GM12878 (cell line): ENCODE measurements at regions of chr1 and their contacts with region 1.

Region 1: DNA sequence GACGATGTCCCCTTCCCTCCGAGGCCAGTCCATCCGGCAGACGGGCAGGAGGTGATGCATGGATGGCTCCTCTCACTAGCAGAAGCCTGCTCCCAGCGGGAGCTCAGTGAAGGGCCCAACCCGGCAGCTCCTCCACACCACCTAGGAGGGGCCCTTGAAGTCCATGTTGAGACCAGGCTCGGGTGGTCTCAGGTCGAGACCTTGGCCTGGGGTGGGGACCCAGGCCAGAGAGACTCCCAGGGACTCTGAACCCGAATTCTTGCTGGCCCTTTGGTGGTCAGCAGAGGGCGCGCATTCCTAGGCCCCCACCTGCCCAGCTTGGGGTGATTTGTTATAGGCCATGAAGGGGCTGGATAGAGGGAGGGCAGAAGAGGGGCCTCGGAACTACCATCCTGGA is 642 bp upstream of the NT5C1A start:
- DNase-seq: no peak
- ATAC-seq: peak; percentile 70
- H3K4me3 ChIP-seq: peak overlapping the region; percentile 64
- H3K27ac ChIP-seq: no peak overlapping the region
- H3K4me1 ChIP-seq: peaks cover 17% of the 10 kb centered on the region
- H3K27me3 ChIP-seq: peaks cover 0 to 5% of the 10 kb centered on the region in 2 experiments; a peak in 2 of 4 replicates
- CTCF ChIP-seq: peak; percentile 50 to 71 (median 63)
- EP300 ChIP-seq: no peak
- POLR2A ChIP-seq: no peak
- RAD21 ChIP-seq: peak; percentile 59

Region 2: DNA sequence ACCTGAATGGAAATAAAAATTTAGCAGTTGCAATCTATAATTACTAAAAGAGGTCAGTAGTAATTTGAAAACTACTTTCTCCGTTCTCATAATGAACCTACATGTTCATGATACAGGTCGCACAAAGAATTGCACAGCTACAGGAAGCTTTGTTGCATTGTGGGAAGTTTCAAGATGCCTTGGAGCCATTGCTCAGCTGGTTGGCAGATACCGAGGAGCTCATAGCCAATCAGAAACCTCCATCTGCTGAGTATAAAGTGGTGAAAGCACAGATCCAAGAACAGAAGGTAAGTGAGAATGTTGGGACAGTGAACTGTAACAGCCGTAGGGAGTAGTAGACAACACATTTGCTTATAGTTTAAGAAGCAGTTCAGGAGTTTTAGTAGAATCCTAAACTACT is 249.9 kb before region 1 on chr1:
- CTCF ChIA-PET with region 1: no interaction called
- POLR2A ChIA-PET with region 1: no interaction called
- RAD21 ChIA-PET with region 1: no interaction called
- SMC1A ChIA-PET with region 1: no interaction called
- in situ Hi-C with region 1: no loop called
- intact Hi-C with region 1: no loop called
- DNase-seq: no peak
- ATAC-seq: no peak
- H3K4me3 ChIP-seq: no peak overlapping the region
- H3K27ac ChIP-seq: no peak overlapping the region
- H3K4me1 ChIP-seq: no peaks in the 10 kb centered on the region
- H3K27me3 ChIP-seq: no peaks in the 10 kb centered on the region
- CTCF ChIP-seq: no peak
- EP300 ChIP-seq: no peak
- POLR2A ChIP-seq: no peak
- RAD21 ChIP-seq: no peak

Region 3: GRCh38 chr1:39525366-39526165 is 147.0 kb before region 1 on chr1:
- CTCF ChIA-PET with region 1: no interaction called
- POLR2A ChIA-PET with region 1: no interaction called
- RAD21 ChIA-PET with region 1: no interaction called
- SMC1A ChIA-PET with region 1: no interaction called
- in situ Hi-C with region 1: no loop called
- intact Hi-C with region 1: no loop called
- DNase-seq: peak; percentile 84
- ATAC-seq: peak; percentile 99
- H3K4me3 ChIP-seq: no peak overlapping the region
- H3K27ac ChIP-seq: peak overlapping the region; percentile 42
- H3K4me1 ChIP-seq: peaks cover 22% of the 10 kb centered on the region
- H3K27me3 ChIP-seq: no peaks in the 10 kb centered on the region
- CTCF ChIP-seq: no peak
- EP300 ChIP-seq: peak in 1 of 2 experiments; percentile 64; a peak in 1 of 4 replicates
- POLR2A ChIP-seq: 0 out of 2 replicates have a peak, but pooled peaks have one; percentile 24
- RAD21 ChIP-seq: no peak

Region 4: GRCh38 chr1:39653546-39654031 is 19.0 kb before region 1 on chr1:
- CTCF ChIA-PET with region 1: interaction called, 244 read pairs
- POLR2A ChIA-PET with region 1: interaction called, 4 read pairs
- RAD21 ChIA-PET with region 1: interaction called, 10 read pairs
- SMC1A ChIA-PET with region 1: interaction called, 9 read pairs
- in situ Hi-C with region 1: no loop called
- intact Hi-C with region 1: no loop called
- DNase-seq: peak; percentile 23
- ATAC-seq: peak; percentile 82
- H3K4me3 ChIP-seq: no peak overlapping the region
- H3K27ac ChIP-seq: no peak overlapping the region
- H3K4me1 ChIP-seq: peaks cover 3% of the 10 kb centered on the region; the same call in 1 of the 2 replicates
- H3K27me3 ChIP-seq: no peaks in the 10 kb centered on the region; a peak in 1 of 4 replicates
- CTCF ChIP-seq: peak; percentile 87 to 91 (median 91)
- EP300 ChIP-seq: no peak
- POLR2A ChIP-seq: no peak
- RAD21 ChIP-seq: peak; percentile 82

Region 5: DNA sequence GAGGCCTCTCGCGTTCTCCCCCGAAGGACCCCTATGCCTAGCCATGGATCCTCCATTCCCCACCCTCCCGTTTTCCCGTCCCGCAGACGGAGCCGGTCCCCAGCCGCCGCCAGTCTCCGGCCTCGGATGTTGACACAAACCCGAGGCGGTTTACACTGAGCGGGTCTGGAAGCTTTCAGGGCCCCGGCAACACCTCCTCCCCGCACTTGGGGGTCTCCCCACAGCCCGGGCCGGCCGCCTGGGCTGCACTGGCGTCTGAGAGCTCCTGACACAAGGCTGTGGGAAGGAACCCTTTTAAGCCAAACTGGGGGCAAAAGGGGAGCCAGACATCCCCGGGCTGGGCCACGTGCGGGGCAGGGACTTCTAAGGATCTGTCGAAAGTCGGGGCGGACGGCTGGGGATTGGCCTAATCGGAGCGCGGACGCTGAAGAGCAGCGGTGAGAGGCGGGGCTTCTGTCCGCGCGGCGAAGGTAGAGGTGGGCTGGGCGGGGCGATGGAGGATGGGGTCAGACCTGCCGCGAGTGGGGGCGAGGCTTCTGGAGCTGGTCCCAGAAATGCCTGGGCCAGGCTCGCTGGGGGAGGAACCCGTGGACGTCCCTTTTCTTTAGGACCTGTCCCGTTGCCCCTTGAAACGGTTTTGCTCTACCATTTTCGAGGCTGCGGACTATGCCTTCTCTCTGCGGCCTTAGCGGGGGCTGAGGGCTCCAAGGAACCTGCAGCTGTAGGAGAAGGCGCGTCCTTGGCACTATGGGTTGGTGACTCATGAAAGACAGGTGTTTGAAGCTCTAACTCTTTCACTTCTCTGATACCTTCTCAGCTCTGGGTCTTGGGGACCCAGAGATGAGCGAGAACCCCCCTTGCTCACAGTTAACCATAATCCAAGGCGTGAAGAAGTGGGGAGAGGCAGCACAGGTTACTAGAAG is 19.9 kb after region 1 on chr1:
- CTCF ChIA-PET with region 1: interaction called, 15 read pairs
- POLR2A ChIA-PET with region 1: no interaction called
- RAD21 ChIA-PET with region 1: no interaction called
- SMC1A ChIA-PET with region 1: interaction called, 4 read pairs
- in situ Hi-C with region 1: no loop called
- intact Hi-C with region 1: no loop called
- DNase-seq: no peak
- ATAC-seq: no peak
- H3K4me3 ChIP-seq: no peak overlapping the region
- H3K27ac ChIP-seq: no peak overlapping the region
- H3K4me1 ChIP-seq: peaks cover 7% of the 10 kb centered on the region
- H3K27me3 ChIP-seq: peaks cover 1 to 4% of the 10 kb centered on the region in 2 experiments; a peak in 3 of 4 replicates
- CTCF ChIP-seq: no peak
- EP300 ChIP-seq: no peak
- POLR2A ChIP-seq: no peak
- RAD21 ChIP-seq: no peak

Region 6: DNA sequence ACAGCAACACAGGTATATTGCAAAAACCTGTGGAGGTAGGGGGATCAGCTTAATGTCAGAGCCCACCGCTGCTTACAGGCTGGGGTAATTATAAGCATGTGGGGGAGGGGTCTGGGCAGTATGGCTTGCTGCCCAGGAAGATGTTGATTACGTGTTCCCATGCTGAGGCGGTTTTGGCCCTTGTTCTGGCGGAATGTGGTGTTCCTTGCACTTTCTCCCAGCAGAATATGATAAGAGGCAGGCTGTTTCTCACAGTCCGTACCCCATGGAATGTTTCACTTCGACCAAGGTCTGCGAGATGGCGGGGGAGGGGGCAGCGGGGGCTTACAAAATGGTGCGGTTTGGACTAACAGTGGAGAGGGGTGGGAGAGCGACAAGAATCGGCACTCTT is 28.5 kb after region 1 on chr1:
- CTCF ChIA-PET with region 1: interaction called, 13 read pairs
- POLR2A ChIA-PET with region 1: no interaction called
- RAD21 ChIA-PET with region 1: no interaction called
- SMC1A ChIA-PET with region 1: interaction called, 5 read pairs
- in situ Hi-C with region 1: no loop called
- intact Hi-C with region 1: no loop called
- DNase-seq: no peak
- ATAC-seq: no peak
- H3K4me3 ChIP-seq: no peak overlapping the region
- H3K27ac ChIP-seq: no peak overlapping the region
- H3K4me1 ChIP-seq: no peaks in the 10 kb centered on the region
- H3K27me3 ChIP-seq: no peaks in the 10 kb centered on the region; a peak in 1 of 4 replicates
- CTCF ChIP-seq: no peak
- EP300 ChIP-seq: no peak
- POLR2A ChIP-seq: no peak
- RAD21 ChIP-seq: no peak

Region 7: GRCh38 chr1:39720094-39720999 is 47.8 kb after region 1 on chr1:
- CTCF ChIA-PET with region 1: interaction called, 24 read pairs
- POLR2A ChIA-PET with region 1: no interaction called
- RAD21 ChIA-PET with region 1: interaction called, 6 read pairs
- SMC1A ChIA-PET with region 1: interaction called, 5 read pairs
- in situ Hi-C with region 1: no loop called
- intact Hi-C with region 1: loop called (anchors 2 kb)
- DNase-seq: no peak
- ATAC-seq: peak; percentile 76
- H3K4me3 ChIP-seq: no peak overlapping the region
- H3K27ac ChIP-seq: no peak overlapping the region
- H3K4me1 ChIP-seq: no peaks in the 10 kb centered on the region
- H3K27me3 ChIP-seq: no peaks in the 10 kb centered on the region
- CTCF ChIP-seq: peak; percentile 34 to 74 (median 59)
- EP300 ChIP-seq: no peak
- POLR2A ChIP-seq: no peak
- RAD21 ChIP-seq: peak; percentile 87

Region 8: GRCh38 chr1:39799770-39800470 is 127.4 kb after region 1 on chr1:
- CTCF ChIA-PET with region 1: interaction called, 26 read pairs
- POLR2A ChIA-PET with region 1: no interaction called
- RAD21 ChIA-PET with region 1: interaction called, 3 read pairs
- SMC1A ChIA-PET with region 1: interaction called, 3 read pairs
- in situ Hi-C with region 1: no loop called
- intact Hi-C with region 1: no loop called
- DNase-seq: no peak
- ATAC-seq: peak; percentile 85
- H3K4me3 ChIP-seq: no peak overlapping the region
- H3K27ac ChIP-seq: peak overlapping the region; percentile 53; the same call in 1 of the 2 replicates
- H3K4me1 ChIP-seq: peaks cover 6% of the 10 kb centered on the region
- H3K27me3 ChIP-seq: no peaks in the 10 kb centered on the region
- CTCF ChIP-seq: peak; percentile 65 to 88 (median 81)
- EP300 ChIP-seq: no peak
- POLR2A ChIP-seq: no peak
- RAD21 ChIP-seq: peak; percentile 58

Region 9: GRCh38 chr1:39816415-39817090 is 144.0 kb after region 1 on chr1:
- CTCF ChIA-PET with region 1: no interaction called
- POLR2A ChIA-PET with region 1: no interaction called
- RAD21 ChIA-PET with region 1: no interaction called
- SMC1A ChIA-PET with region 1: no interaction called
- in situ Hi-C with region 1: no loop called
- intact Hi-C with region 1: no loop called
- DNase-seq: peak; percentile 55
- ATAC-seq: peak; percentile 79
- H3K4me3 ChIP-seq: no peak overlapping the region
- H3K27ac ChIP-seq: peak overlapping the region; percentile 42; the same call in 1 of the 2 replicates
- H3K4me1 ChIP-seq: peaks cover 17% of the 10 kb centered on the region
- H3K27me3 ChIP-seq: no peaks in the 10 kb centered on the region
- CTCF ChIP-seq: peak; percentile 79 to 88 (median 80)
- EP300 ChIP-seq: 0 out of 4 replicates have a peak, but pooled peaks of 1 of the 2 experiments have one; percentile 32
- POLR2A ChIP-seq: no peak
- RAD21 ChIP-seq: peak; percentile 87